ENCODE measurements at regions of chr7 and their contacts with region 1.

Region 1: GRCh38 chr7:47945261-47946001 is 2.8 kb downstream of the PKD1L1 start:
- DNase-seq: peak; percentile 74
- H3K4me3 ChIP-seq: no peak overlapping the region
- H3K27ac ChIP-seq: no peak overlapping the region
- H3K4me1 ChIP-seq: peaks cover 24 to 35% of the 10 kb centered on the region in 2 experiments
- H3K27me3 ChIP-seq: no peaks in the 10 kb centered on the region
- CTCF ChIP-seq: peak; percentile 99
- EP300 ChIP-seq: no peak
- RAD21 ChIP-seq: peak; percentile 93

Region 2: GRCh38 chr7:47852330-47853245 is 92.8 kb before region 1 on chr7:
- CTCF ChIA-PET with region 1: interaction called, 12 read pairs
- POLR2A ChIA-PET with region 1: no interaction called
- DNase-seq: peak; percentile 49
- H3K4me3 ChIP-seq: no peak overlapping the region
- H3K27ac ChIP-seq: no peak overlapping the region
- H3K4me1 ChIP-seq: no peaks in the 10 kb centered on the region
- H3K27me3 ChIP-seq: no peaks in the 10 kb centered on the region
- CTCF ChIP-seq: peak; percentile 44
- EP300 ChIP-seq: no peak
- RAD21 ChIP-seq: peak; percentile 64

Region 3: DNA sequence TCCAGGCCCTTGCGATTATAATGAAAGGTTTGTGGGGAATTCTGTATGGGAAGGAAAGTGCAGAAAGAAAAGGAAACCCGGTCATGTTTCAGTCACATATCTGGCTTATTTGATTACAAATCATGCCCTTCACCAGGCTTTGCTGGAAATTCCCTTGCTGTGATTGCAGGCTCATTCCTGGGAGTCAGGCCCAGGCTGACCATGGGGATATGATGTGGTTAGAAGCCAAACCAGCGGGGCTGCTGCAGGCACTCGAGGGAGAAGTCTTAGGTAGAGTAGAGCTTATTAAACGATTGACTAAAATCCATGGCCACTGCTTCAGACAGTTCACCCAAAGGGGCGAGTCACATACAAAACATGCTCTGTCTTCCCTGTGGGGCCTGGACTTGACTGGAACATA is 13.4 kb before region 1 on chr7:
- CTCF ChIA-PET with region 1: interaction called, 58 read pairs
- POLR2A ChIA-PET with region 1: no interaction called
- DNase-seq: no peak
- H3K4me3 ChIP-seq: no peak overlapping the region
- H3K27ac ChIP-seq: no peak overlapping the region
- H3K4me1 ChIP-seq: peaks cover 4 to 12% of the 10 kb centered on the region in 2 experiments; a peak in 2 of 4 replicates
- H3K27me3 ChIP-seq: no peaks in the 10 kb centered on the region
- CTCF ChIP-seq: no peak
- EP300 ChIP-seq: no peak
- RAD21 ChIP-seq: no peak

Region 4: GRCh38 chr7:47979145-47979831 is 33.9 kb after region 1 on chr7 and contains the start of gene HUS1:
- CTCF ChIA-PET with region 1: interaction called, 22 read pairs
- POLR2A ChIA-PET with region 1: no interaction called
- DNase-seq: peak; percentile 98
- H3K4me3 ChIP-seq: peak within 1 kb of the TSS; percentile 75 to 87
- H3K27ac ChIP-seq: peak within 1 kb of the TSS; percentile 76 to 83
- H3K4me1 ChIP-seq: peaks cover 8% of the 10 kb centered on the region in 2 experiments; a peak in 3 of 4 replicates
- H3K27me3 ChIP-seq: no peaks in the 10 kb centered on the region
- CTCF ChIP-seq: no peak
- EP300 ChIP-seq: peak in 1 of 2 experiments; percentile 54; a peak in 1 of 4 replicates
- RAD21 ChIP-seq: no peak
- polyA plus RNA-seq, gene HUS1: 17.8 and 22.9 TPM in 2 replicates

Region 5: DNA sequence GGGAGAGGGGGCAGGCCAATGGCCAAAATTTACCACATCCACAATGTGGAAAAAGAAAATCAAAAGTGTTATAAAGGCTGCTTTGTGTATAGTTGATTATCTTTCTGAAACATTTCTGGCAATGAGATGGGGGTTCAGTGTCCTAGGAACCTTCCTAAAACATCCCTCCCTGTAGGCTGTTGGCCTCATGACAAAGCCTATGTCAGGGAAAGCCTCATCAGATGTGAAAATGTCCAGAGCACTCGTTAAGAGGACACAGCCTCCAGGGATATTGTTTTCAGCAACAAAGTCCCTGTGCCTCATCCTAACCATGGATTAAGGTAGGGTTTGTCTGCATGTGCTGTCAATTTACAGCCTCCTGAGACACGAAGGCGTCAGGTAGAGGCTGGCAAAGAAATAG is 66.5 kb after region 1 on chr7:
- CTCF ChIA-PET with region 1: interaction called, 11 read pairs
- POLR2A ChIA-PET with region 1: no interaction called
- DNase-seq: no peak
- H3K4me3 ChIP-seq: no peak overlapping the region
- H3K27ac ChIP-seq: no peak overlapping the region
- H3K4me1 ChIP-seq: no peaks in the 10 kb centered on the region; a peak in 1 of 4 replicates
- H3K27me3 ChIP-seq: no peaks in the 10 kb centered on the region; the same call in 1 of the 2 replicates
- CTCF ChIP-seq: no peak
- EP300 ChIP-seq: no peak
- RAD21 ChIP-seq: no peak

Region 6: GRCh38 chr7:48118041-48118440 is 172.6 kb after region 1 on chr7:
- CTCF ChIA-PET with region 1: interaction called, 185 read pairs
- POLR2A ChIA-PET with region 1: no interaction called
- DNase-seq: no peak
- H3K4me3 ChIP-seq: no peak overlapping the region
- H3K27ac ChIP-seq: no peak overlapping the region
- H3K4me1 ChIP-seq: no peaks in the 10 kb centered on the region
- H3K27me3 ChIP-seq: no peaks in the 10 kb centered on the region
- CTCF ChIP-seq: no peak
- EP300 ChIP-seq: no peak
- RAD21 ChIP-seq: no peak